ENCODE measurements at regions of chr22 and their contacts with region 1.

Region 1: DNA sequence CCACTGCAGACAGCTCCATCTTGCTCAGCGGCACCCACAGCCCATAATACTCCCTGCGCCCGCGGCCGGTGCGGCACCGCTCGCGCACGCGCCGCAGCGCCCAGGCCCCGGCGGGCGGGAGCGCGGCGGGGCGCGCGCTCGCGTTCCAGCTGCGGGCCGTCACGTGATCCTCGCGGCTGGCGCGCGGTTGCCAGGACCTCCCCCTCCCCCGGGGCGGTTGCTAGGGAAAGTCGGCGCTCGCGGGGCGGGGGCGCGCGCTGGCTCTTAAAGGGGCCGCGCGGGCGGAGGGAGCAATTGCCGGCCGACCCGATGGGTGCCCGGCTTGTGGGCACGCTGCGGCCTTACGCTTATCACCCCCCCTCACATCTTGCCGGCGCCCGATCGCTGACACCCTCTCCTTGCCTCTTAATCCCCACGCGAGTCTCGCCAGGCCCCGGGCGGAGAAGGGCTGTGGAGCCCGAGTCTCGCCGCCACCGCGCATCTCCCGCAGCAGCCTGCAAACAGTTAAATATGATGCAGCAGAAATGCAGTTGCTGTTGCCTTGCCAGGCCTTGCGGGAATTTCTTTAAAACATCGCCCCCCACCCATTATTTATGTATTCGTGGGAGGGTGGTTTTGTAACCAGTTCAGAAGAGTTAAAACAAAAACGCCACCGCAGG is at the start of gene CBX6:
- DNase-seq: no peak
- H3K4me3 ChIP-seq: peak within 1 kb of the TSS; percentile 75
- CTCF ChIP-seq: no peak

Region 2: GRCh38 chr22:38755911-38756532 is 116.3 kb before region 1 on chr22 and contains the start of gene SUN2:
- CTCF ChIA-PET with region 1: interaction called, 11 read pairs
- POLR2A ChIA-PET with region 1: no interaction called
- DNase-seq: no peak
- H3K4me3 ChIP-seq: peak within 1 kb of the TSS; percentile 67
- CTCF ChIP-seq: no peak

Region 3: DNA sequence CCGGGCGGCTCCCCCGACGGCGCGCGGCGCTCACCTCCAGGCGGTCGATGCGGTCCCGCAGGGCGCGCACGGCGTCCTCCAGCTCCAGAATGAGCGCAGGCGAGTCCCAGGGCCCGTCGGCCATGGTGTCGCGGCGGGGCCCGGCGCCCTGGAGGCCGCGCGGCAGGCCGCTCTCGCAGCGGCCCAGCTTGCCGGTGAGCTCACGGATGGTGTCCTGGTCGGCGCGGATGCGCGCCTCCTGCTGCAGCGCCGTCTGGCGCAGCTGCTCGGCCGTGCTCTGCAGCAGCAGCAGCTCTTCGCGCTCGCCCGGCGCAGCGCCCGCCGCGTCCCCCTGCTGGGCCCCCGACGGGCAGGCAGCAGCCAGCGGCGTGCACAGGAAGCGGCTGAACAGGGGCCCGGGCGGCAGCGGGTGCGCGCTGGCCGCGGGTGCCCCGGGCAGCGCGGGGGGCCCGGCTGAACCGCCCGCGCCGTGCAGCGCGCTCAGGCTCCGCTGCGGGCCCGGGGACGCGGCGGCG is 29.0 kb before region 1 on chr22:
- CTCF ChIA-PET with region 1: interaction called, 216 read pairs
- POLR2A ChIA-PET with region 1: no interaction called
- DNase-seq: no peak
- H3K4me3 ChIP-seq: peak overlapping the region; percentile 46
- CTCF ChIP-seq: peak; percentile 54

Region 4: GRCh38 chr22:38981992-38982927 is 110.0 kb after region 1 on chr22 and contains the start of gene APOBEC3B:
- CTCF ChIA-PET with region 1: interaction called, 22 read pairs
- POLR2A ChIA-PET with region 1: no interaction called
- DNase-seq: peak; percentile 73
- H3K4me3 ChIP-seq: peak within 1 kb of the TSS; percentile 52
- CTCF ChIP-seq: no peak

Region 5: GRCh38 chr22:39013942-39014722 is 141.8 kb after region 1 on chr22 and contains the start of gene APOBEC3C:
- CTCF ChIA-PET with region 1: interaction called, 238 read pairs
- POLR2A ChIA-PET with region 1: no interaction called
- DNase-seq: peak; percentile 58
- H3K4me3 ChIP-seq: peak within 1 kb of the TSS; percentile 71
- CTCF ChIP-seq: peak; percentile 21

Region 6: GRCh38 chr22:39148747-39149561 is 276.7 kb after region 1 on chr22:
- CTCF ChIA-PET with region 1: interaction called, 10 read pairs
- POLR2A ChIA-PET with region 1: no interaction called
- DNase-seq: no peak
- H3K4me3 ChIP-seq: no peak overlapping the region
- CTCF ChIP-seq: no peak

Measured in AG04449 (cell line).